HepG2 (cell line): ENCODE measurements at regions of chr7 and their contacts with region 1.

Region 1: DNA sequence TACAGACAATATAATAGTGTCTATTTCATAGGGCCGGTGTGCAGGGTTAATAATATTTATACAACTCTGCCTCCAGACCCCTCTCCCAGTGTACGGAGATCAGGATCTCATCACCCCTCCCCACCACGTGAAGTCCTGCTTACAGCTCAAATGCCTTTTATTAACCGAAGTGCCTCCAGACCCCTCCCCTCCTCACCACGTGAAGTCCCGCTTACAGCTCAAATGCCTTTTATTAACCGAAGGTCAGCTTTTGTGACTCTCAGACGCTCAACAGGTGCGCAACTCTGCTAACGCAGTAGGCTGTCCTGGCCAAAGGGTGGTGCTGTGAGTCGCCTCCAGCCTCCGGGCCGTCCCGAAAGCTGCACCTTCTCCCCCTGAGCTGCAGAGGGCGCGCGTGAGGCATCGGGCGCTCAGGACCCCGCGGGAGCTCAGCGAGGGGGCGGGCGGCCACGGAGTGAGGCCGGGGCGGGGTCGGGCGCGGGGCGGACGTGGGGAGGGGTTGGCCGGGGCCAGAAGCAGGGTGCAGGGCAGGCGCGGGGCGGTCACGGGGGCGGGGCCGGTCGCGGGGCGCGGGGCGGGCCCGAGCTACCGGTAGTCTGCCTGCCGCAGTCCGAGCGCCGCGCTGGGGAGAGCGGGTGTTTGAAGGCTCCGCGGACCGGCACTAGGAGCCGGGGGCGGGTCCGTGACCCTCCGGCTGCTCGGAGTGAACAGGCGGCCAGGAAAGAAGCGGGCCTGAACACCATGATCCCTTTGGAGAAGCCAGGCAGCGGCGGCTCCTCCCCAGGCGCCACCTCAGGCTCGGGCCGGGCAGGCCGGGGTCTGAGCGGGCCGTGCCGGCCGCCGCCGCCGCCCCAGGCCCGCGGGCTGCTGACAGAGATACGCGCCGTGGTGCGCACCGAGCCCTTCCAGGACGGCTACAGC is at the start of gene STK17A:
- DNase-seq: peak; percentile 88
- ATAC-seq: peak; percentile 84
- H3K4me3 ChIP-seq: peak within 1 kb of the TSS; percentile 89 to 96 (median 93)
- H3K27ac ChIP-seq: peak within 1 kb of the TSS; percentile 75
- H3K4me1 ChIP-seq: peaks cover 49% of the 10 kb centered on the region
- H3K27me3 ChIP-seq: peaks cover 0 to 5% of the 10 kb centered on the region in 2 experiments; a peak in 1 of 5 replicates
- CTCF ChIP-seq: peak; percentile 99
- EP300 ChIP-seq: 0 out of 4 replicates have a peak, but pooled peaks of 1 of the 2 experiments have one; percentile 13
- POLR2A ChIP-seq: peak; percentile 95 to 97
- RAD21 ChIP-seq: peak; percentile 95
- total RNA-seq, gene STK17A: 24.3 and 30.2 TPM in 2 replicates

Region 2: GRCh38 chr7:43489257-43489656 is 93.5 kb before region 1 on chr7:
- CTCF ChIA-PET with region 1: no interaction called
- POLR2A ChIA-PET with region 1: interaction called, 11 read pairs
- in situ Hi-C with region 1: no loop called
- intact Hi-C with region 1: no loop called
- DNase-seq: peak; percentile 50
- ATAC-seq: peak; percentile 46
- H3K4me3 ChIP-seq: no peak overlapping the region
- H3K27ac ChIP-seq: peak overlapping the region; percentile 74
- H3K4me1 ChIP-seq: peaks cover 82% of the 10 kb centered on the region
- H3K27me3 ChIP-seq: no peaks in the 10 kb centered on the region
- CTCF ChIP-seq: no peak
- EP300 ChIP-seq: no peak
- POLR2A ChIP-seq: no peak
- RAD21 ChIP-seq: no peak

Region 3: GRCh38 chr7:43522406-43523156 is 60.2 kb before region 1 on chr7:
- CTCF ChIA-PET with region 1: no interaction called
- POLR2A ChIA-PET with region 1: no interaction called
- in situ Hi-C with region 1: no loop called
- intact Hi-C with region 1: no loop called
- DNase-seq: no peak
- ATAC-seq: peak; percentile 72
- H3K4me3 ChIP-seq: no peak overlapping the region
- H3K27ac ChIP-seq: no peak overlapping the region
- H3K4me1 ChIP-seq: peaks cover 13% of the 10 kb centered on the region
- H3K27me3 ChIP-seq: peaks cover 0 to 10% of the 10 kb centered on the region in 2 experiments; a peak in 2 of 5 replicates
- CTCF ChIP-seq: no peak
- EP300 ChIP-seq: no peak
- POLR2A ChIP-seq: no peak
- RAD21 ChIP-seq: no peak

Region 4: DNA sequence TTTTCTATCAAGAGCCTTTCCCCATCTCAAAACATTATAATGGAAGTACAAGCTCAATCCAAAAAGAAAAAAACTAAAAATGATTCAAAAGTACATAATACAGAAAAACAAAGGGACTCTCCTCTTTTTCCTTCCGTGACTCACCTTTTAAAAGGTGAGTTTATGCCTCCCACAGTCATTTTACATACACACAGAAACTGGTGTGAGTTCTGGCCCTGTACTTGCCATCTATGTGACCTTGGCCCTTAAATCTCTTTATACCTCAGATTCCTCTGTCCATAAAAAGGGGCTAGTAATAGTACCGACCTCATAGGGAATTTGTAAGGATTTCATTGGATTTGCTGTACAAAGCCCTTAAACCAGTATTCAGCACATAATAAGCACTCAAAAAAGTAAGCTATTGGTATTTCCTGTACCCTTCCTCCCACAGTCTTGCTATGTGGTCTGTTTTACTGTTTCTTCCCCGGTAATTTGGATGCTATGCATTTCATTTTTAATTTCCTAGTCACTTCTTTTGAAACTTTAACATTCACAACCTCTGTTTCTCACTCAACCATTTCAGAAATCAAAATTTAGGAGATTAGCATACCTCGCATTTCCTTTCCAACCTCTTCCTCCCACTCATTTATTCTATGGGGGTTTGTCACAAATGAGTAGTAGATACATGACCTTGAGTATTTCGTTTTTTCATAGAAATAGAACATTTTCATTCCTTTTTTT is 39.1 kb after region 1 on chr7:
- CTCF ChIA-PET with region 1: no interaction called
- POLR2A ChIA-PET with region 1: interaction called, 3 read pairs
- in situ Hi-C with region 1: no loop called
- intact Hi-C with region 1: loop called (anchors 5 kb)
- DNase-seq: no peak
- ATAC-seq: no peak
- H3K4me3 ChIP-seq: no peak overlapping the region
- H3K27ac ChIP-seq: no peak overlapping the region
- H3K4me1 ChIP-seq: no peaks in the 10 kb centered on the region
- H3K27me3 ChIP-seq: no peaks in the 10 kb centered on the region
- CTCF ChIP-seq: no peak
- EP300 ChIP-seq: no peak
- POLR2A ChIP-seq: no peak
- RAD21 ChIP-seq: no peak

Region 5: GRCh38 chr7:43666938-43667337 is 84.2 kb after region 1 on chr7:
- CTCF ChIA-PET with region 1: no interaction called
- POLR2A ChIA-PET with region 1: no interaction called
- in situ Hi-C with region 1: no loop called
- intact Hi-C with region 1: no loop called
- DNase-seq: no peak
- ATAC-seq: no peak
- H3K4me3 ChIP-seq: no peak overlapping the region
- H3K27ac ChIP-seq: no peak overlapping the region
- H3K4me1 ChIP-seq: peaks cover 36% of the 10 kb centered on the region
- H3K27me3 ChIP-seq: no peaks in the 10 kb centered on the region
- CTCF ChIP-seq: no peak
- EP300 ChIP-seq: no peak
- POLR2A ChIP-seq: no peak
- RAD21 ChIP-seq: no peak

Region 6: DNA sequence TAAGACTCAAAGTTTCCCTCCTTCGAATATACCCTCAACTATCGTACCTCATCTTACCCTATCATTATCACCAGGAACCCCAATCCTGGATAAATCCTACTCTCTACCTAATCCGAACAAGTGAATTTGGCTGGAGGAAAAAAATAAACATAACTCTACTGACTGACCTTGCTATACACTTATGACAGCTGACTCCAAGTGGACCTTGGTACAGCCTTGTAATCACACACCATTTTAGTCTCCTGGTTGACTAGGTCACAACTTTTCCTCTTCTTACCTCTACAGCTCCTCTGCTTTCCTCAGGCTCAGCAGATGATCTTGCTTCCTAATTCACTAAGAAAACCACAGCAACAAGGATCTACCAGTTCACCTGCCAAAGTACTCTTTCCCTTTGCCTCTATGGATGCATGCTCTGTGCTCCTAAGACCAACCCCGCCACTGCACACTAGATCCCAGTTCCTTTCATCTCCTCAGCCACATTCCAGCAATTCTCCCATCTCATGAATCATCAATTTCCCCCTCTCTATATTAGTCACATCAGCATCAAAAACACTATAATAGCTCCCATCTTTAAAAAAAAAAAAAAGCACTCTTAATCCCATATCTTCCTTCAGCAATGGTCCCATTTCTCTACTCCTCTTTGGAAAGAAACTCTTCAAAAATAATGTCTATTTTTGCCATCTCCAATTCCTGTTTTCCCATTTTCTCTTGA is 111.1 kb after region 1 on chr7:
- CTCF ChIA-PET with region 1: interaction called, 59 read pairs
- POLR2A ChIA-PET with region 1: interaction called, 39 read pairs
- in situ Hi-C with region 1: no loop called
- intact Hi-C with region 1: no loop called
- DNase-seq: peak; percentile 22
- ATAC-seq: peak; percentile 69
- H3K4me3 ChIP-seq: no peak overlapping the region
- H3K27ac ChIP-seq: peak overlapping the region; percentile 26
- H3K4me1 ChIP-seq: peaks cover 60% of the 10 kb centered on the region
- H3K27me3 ChIP-seq: no peaks in the 10 kb centered on the region
- CTCF ChIP-seq: no peak
- EP300 ChIP-seq: no peak
- POLR2A ChIP-seq: no peak
- RAD21 ChIP-seq: no peak

Region 7: DNA sequence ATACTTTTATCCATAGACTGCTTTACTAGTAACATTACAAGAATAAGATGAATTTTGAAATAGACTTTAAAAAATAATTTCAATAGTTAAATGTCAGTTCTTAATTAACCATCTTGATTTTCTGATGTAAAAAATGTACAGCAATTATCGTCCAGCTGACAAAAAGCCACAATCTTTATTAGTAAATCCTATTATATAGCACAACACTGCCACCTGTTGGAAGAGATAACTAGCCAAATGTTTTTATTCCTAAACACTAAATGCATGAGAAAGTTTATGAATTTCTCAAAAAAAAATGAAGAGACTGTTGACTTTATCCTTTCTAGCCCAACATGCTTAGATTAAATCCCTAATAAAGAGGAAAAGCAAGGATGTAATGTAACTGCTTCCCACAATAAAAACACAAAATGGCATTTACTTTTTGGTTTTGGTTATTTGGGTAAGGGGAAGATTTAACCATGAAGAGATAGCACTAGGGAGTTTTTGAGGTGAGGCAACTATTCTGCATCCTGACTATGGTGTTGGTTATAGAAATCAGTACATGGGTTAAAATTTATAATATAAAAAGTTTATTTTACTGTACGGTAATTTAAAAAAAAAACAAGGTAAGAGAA is 138.5 kb after region 1 on chr7:
- CTCF ChIA-PET with region 1: interaction called, 12 read pairs
- POLR2A ChIA-PET with region 1: interaction called, 3 read pairs
- in situ Hi-C with region 1: no loop called
- intact Hi-C with region 1: loop called (anchors 1 kb)
- DNase-seq: peak; percentile 39
- ATAC-seq: no peak
- H3K4me3 ChIP-seq: no peak overlapping the region
- H3K27ac ChIP-seq: no peak overlapping the region
- H3K4me1 ChIP-seq: peaks cover 12% of the 10 kb centered on the region
- H3K27me3 ChIP-seq: no peaks in the 10 kb centered on the region
- CTCF ChIP-seq: peak; percentile 55
- EP300 ChIP-seq: no peak
- POLR2A ChIP-seq: no peak
- RAD21 ChIP-seq: no peak

Region 8: GRCh38 chr7:43758029-43758821 is 175.5 kb after region 1 on chr7 and contains the start of gene BLVRA:
- CTCF ChIA-PET with region 1: no interaction called
- POLR2A ChIA-PET with region 1: interaction called, 12 read pairs
- in situ Hi-C with region 1: no loop called
- intact Hi-C with region 1: no loop called
- DNase-seq: peak; percentile 37
- ATAC-seq: peak; percentile 88
- H3K4me3 ChIP-seq: peak within 1 kb of the TSS; percentile 75 to 91 (median 82)
- H3K27ac ChIP-seq: peak within 1 kb of the TSS; percentile 60
- H3K4me1 ChIP-seq: peaks cover 58% of the 10 kb centered on the region
- H3K27me3 ChIP-seq: no peaks in the 10 kb centered on the region; a peak in 1 of 5 replicates
- CTCF ChIP-seq: no peak
- EP300 ChIP-seq: no peak
- POLR2A ChIP-seq: peak; percentile 20 to 87; a peak in 2 of 4 replicates
- RAD21 ChIP-seq: no peak
- total RNA-seq, gene BLVRA: 64.2 and 95.5 TPM in 2 replicates

Region 9: GRCh38 chr7:43824963-43825362 is 242.2 kb after region 1 on chr7:
- CTCF ChIA-PET with region 1: no interaction called
- POLR2A ChIA-PET with region 1: no interaction called
- in situ Hi-C with region 1: no loop called
- intact Hi-C with region 1: no loop called
- DNase-seq: no peak
- ATAC-seq: no peak
- H3K4me3 ChIP-seq: no peak overlapping the region
- H3K27ac ChIP-seq: no peak overlapping the region
- H3K4me1 ChIP-seq: peaks cover 22% of the 10 kb centered on the region
- H3K27me3 ChIP-seq: peaks cover 0 to 19% of the 10 kb centered on the region in 2 experiments; a peak in 1 of 5 replicates
- CTCF ChIP-seq: no peak
- EP300 ChIP-seq: no peak
- POLR2A ChIP-seq: no peak
- RAD21 ChIP-seq: no peak